Heart left ventricle (tissue), 16 donors: ENCODE measurements at regions of chr1 and their contacts with region 1.

Region 1: GRCh38 chr1:178037503-178038253 is 56.2 kb upstream of the RASAL2 start:
- DNase-seq: peak; percentile 91 to 95 (median 94)
- ATAC-seq: peak; percentile 89 to 99 (median 98)
- H3K4me3 ChIP-seq: peak overlapping the region; percentile 61 to 97 (median 78)
- H3K27ac ChIP-seq: peak overlapping the region; percentile 61 to 94 (median 86)
- H3K4me1 ChIP-seq: peaks cover 0 to 45% (median 9%) of the 10 kb centered on the region in 12 donors
- H3K27me3 ChIP-seq: no peaks in the 10 kb centered on the region
- CTCF ChIP-seq: peak; percentile 20 to 71 (median 56)
- POLR2A ChIP-seq: peak in 1 of 2 donors; percentile 66

Region 2: DNA sequence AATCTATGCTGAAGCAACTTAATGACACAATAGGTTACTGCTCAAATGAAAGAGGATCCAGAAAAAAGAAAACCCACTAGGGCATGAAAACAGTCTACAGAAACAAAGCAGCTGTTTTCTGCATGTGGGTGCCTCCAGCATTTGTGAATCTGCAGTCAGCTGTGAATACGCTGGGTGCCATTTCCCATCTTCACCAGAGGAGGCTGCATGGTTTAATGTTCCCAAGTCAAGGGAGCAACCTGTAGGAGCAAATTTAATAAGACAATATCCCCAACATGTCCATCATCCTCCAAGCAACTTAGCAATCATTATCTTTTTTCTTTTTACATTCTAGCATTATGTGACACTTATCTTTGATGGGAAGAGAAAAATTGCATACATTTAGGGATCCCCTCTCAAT is 470.3 kb before region 1 on chr1:
- intact Hi-C with region 1: no loop called
- DNase-seq: no peak
- ATAC-seq: no peak
- H3K4me3 ChIP-seq: no peak overlapping the region
- H3K27ac ChIP-seq: no peak overlapping the region
- H3K4me1 ChIP-seq: no peaks in the 10 kb centered on the region
- H3K27me3 ChIP-seq: peaks cover 0 to 6% (median 0%) of the 10 kb centered on the region in 9 donors
- CTCF ChIP-seq: peak in 1 of 12 donors; percentile 11
- POLR2A ChIP-seq: no peak

Region 3: DNA sequence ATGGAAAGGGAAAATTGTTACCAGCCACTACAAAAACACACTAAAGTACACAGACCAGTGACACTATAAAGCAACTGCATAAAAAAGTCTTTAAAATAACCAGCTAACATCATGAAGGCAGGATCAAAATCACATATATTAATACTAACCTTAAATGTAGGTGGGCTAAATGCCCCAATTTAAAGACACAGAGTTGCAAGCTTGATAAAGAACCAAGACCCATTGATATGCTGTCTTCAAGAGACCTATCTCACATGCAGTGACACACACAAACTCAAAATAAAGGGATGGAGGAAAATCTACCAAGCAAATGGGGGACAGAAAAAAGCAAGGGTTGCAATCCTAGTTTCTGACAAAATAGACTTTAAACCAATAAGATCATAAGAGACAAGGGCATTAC is 314.1 kb before region 1 on chr1:
- intact Hi-C with region 1: no loop called
- DNase-seq: no peak
- ATAC-seq: no peak
- H3K4me3 ChIP-seq: no peak overlapping the region
- H3K27ac ChIP-seq: no peak overlapping the region
- H3K4me1 ChIP-seq: no peaks in the 10 kb centered on the region
- H3K27me3 ChIP-seq: no peaks in the 10 kb centered on the region
- CTCF ChIP-seq: no peak
- POLR2A ChIP-seq: no peak

Region 4: DNA sequence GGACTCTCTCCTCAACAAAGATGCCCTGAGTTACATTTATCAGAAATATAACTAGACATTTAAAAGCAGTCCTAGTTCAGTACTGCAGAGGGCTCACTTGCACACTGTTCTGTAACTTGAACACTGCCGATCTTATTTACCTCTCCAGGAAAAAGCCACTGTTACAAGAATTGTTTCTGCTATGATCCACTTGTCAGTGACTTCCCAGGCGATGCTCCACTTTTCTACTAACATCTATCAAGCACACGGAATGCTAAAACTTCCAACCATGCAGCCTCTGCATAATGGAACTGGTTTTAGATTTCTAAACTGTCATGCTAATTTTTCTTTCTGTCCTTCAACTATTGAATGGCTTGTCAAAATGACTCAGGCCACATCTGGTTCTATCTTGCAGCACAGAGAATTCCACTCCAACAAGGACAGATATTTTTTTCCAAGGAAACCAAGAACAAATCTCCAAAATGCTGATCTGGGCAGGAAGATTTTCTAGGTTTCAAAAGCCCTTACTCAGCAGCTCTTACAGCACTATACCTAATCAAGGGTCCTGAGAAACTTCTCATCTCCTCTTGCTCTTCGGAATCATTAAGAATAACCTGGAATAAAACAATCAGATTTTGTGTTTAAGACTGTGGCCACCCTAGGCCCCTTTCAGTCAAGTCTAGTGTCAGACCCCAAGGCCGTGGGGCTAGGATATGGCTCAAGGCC is 77.7 kb before region 1 on chr1:
- intact Hi-C with region 1: loop called in 2 of 10 experiments (anchors 5 to 10 kb)
- DNase-seq: no peak
- ATAC-seq: peak; percentile 50 to 80 (median 70)
- H3K4me3 ChIP-seq: no peak overlapping the region
- H3K27ac ChIP-seq: no peak overlapping the region
- H3K4me1 ChIP-seq: no peaks in the 10 kb centered on the region
- H3K27me3 ChIP-seq: no peaks in the 10 kb centered on the region
- CTCF ChIP-seq: peak in 10 of 12 donors; percentile 16 to 52 (median 32)
- POLR2A ChIP-seq: no peak